IMR-90 (cell line): ENCODE measurements at regions of chr2 and their contacts with region 1.

Region 1: GRCh38 chr2:208285853-208286252 is 19.8 kb downstream of the PIKFYVE start:
- DNase-seq: no peak
- ATAC-seq: no peak
- H3K4me3 ChIP-seq: no peak overlapping the region
- H3K27ac ChIP-seq: no peak overlapping the region
- H3K4me1 ChIP-seq: no peaks in the 10 kb centered on the region
- H3K27me3 ChIP-seq: no peaks in the 10 kb centered on the region
- CTCF ChIP-seq: no peak
- POLR2A ChIP-seq: no peak
- RAD21 ChIP-seq: no peak

Region 2: DNA sequence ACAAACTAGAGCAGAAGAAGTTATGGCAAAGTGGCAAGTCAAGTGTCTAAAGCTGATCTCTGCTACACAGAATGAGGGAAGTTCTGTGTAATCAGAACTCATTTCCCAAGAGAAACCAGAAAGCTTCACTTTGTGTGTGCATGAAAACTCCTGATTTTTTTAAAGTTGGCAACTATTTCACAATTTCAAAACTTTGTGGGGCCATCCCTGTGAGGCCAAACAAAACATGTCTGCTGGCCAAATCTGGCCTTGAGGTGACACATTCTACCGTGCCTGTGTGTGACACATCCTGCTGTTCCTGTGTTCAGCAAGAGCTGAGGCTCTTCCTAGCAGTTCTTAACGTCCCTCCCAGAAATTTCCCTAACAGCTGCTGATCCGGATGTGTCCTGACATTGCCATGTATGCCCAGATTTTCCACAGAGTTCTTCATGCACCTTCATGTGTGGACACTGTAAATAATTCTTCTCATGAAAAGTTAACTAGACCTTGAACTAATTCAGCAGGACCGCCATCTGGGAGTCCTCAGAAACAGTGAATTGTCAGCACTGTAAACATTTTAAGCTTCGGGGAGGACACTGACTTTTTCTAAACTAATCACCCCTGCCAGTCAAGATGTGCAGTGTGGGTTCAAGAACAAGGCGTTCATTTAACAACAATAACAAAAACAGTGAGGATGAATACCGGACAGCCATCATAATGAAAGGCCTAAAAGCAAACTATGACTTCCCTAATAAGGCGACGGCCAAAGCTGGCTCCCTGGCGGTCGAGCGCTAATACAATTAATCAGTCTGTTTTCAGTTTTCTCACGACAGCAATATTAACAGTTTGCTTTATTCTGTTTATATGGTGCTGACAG is 359.5 kb before region 1 on chr2:
- CTCF ChIA-PET with region 1: no interaction called
- POLR2A ChIA-PET with region 1: no interaction called
- dilution Hi-C with region 1: no loop called
- in situ Hi-C with region 1: no loop called
- intact Hi-C with region 1: no loop called
- DNase-seq: peak; percentile 85
- ATAC-seq: peak; percentile 90
- H3K4me3 ChIP-seq: peak overlapping the region; percentile 7; the same call in 1 of the 2 replicates
- H3K27ac ChIP-seq: peak overlapping the region; percentile 11; the same call in 1 of the 2 replicates
- H3K4me1 ChIP-seq: peaks cover 7% of the 10 kb centered on the region
- H3K27me3 ChIP-seq: no peaks in the 10 kb centered on the region
- CTCF ChIP-seq: no peak
- POLR2A ChIP-seq: no peak
- RAD21 ChIP-seq: no peak

Region 3: DNA sequence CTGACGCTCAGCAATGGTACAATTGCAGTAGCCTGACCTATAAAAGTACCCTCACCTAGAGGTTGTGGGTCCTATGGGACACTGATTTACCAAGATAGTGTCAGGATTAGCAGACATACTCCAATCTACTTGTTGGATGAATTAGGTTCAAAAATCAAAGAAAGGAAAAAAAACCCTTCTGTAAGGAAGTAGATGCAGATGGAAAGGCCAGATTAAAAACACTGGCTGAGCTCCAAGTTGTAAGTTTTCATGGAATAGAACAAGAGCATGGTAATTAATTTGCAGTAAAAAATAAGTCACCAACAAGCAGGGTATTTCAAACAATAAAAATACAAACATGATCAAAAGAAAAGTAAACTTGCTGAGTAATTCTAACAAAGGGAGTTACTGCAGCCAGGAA is 57.4 kb before region 1 on chr2:
- CTCF ChIA-PET with region 1: no interaction called
- POLR2A ChIA-PET with region 1: no interaction called
- dilution Hi-C with region 1: no loop called
- in situ Hi-C with region 1: no loop called
- intact Hi-C with region 1: no loop called
- DNase-seq: no peak
- ATAC-seq: no peak
- H3K4me3 ChIP-seq: no peak overlapping the region
- H3K27ac ChIP-seq: no peak overlapping the region
- H3K4me1 ChIP-seq: no peaks in the 10 kb centered on the region
- H3K27me3 ChIP-seq: no peaks in the 10 kb centered on the region
- CTCF ChIP-seq: no peak
- POLR2A ChIP-seq: no peak
- RAD21 ChIP-seq: no peak

Region 4: GRCh38 chr2:208300847-208301618 is 15.2 kb after region 1 on chr2:
- CTCF ChIA-PET with region 1: interaction called, 3 read pairs
- POLR2A ChIA-PET with region 1: no interaction called
- dilution Hi-C with region 1: no loop called
- in situ Hi-C with region 1: no loop called
- intact Hi-C with region 1: loop called (anchors 2 kb)
- DNase-seq: no peak
- ATAC-seq: no peak
- H3K4me3 ChIP-seq: no peak overlapping the region
- H3K27ac ChIP-seq: no peak overlapping the region
- H3K4me1 ChIP-seq: no peaks in the 10 kb centered on the region; the same call in 1 of the 2 replicates
- H3K27me3 ChIP-seq: no peaks in the 10 kb centered on the region
- CTCF ChIP-seq: no peak
- POLR2A ChIP-seq: no peak
- RAD21 ChIP-seq: no peak